ENCODE measurements at regions of chr2 and their contacts with region 1.

Region 1: GRCh38 chr2:241081643-241082340 is 20.3 kb downstream of the MTERF4 start:
- DNase-seq: no peak
- CTCF ChIP-seq: no peak

Region 2: DNA sequence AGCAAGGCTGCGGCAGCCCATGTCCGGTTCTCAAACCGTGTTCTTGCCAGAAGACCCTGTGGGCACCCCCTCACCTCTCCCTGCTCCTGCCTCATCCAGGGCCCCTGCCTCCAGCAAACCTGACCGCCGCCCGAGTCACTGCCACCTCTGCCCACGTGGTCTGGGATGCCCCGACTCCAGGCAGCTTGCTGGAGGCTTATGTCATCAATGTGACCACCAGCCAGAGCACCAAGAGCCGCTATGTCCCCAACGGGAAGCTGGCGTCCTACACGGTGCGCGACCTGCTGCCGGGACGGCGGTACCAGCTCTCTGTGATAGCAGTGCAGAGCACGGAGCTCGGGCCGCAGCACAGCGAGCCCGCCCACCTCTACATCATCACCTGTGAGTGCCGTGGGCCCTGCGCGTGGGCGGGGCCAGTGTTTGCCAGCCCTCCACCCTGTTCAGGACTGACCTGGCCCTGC is 11.9 kb before region 1 on chr2:
- CTCF ChIA-PET with region 1: interaction called, 12 read pairs
- POLR2A ChIA-PET with region 1: no interaction called
- DNase-seq: no peak
- CTCF ChIP-seq: no peak

Region 3: GRCh38 chr2:241096979-241097378 is 15.2 kb after region 1 on chr2:
- CTCF ChIA-PET with region 1: interaction called, 19 read pairs
- POLR2A ChIA-PET with region 1: no interaction called
- DNase-seq: no peak
- CTCF ChIP-seq: no peak

Region 4: GRCh38 chr2:241102239-241102803 is 20.5 kb after region 1 on chr2 and contains the start of gene MTERF4:
- CTCF ChIA-PET with region 1: interaction called, 19 read pairs
- POLR2A ChIA-PET with region 1: no interaction called
- DNase-seq: peak; percentile 90
- CTCF ChIP-seq: no peak

Region 5: GRCh38 chr2:241110607-241111439 is 29.0 kb after region 1 on chr2:
- CTCF ChIA-PET with region 1: interaction called, 13 read pairs
- POLR2A ChIA-PET with region 1: no interaction called
- DNase-seq: peak; percentile 73
- CTCF ChIP-seq: no peak

Region 6: DNA sequence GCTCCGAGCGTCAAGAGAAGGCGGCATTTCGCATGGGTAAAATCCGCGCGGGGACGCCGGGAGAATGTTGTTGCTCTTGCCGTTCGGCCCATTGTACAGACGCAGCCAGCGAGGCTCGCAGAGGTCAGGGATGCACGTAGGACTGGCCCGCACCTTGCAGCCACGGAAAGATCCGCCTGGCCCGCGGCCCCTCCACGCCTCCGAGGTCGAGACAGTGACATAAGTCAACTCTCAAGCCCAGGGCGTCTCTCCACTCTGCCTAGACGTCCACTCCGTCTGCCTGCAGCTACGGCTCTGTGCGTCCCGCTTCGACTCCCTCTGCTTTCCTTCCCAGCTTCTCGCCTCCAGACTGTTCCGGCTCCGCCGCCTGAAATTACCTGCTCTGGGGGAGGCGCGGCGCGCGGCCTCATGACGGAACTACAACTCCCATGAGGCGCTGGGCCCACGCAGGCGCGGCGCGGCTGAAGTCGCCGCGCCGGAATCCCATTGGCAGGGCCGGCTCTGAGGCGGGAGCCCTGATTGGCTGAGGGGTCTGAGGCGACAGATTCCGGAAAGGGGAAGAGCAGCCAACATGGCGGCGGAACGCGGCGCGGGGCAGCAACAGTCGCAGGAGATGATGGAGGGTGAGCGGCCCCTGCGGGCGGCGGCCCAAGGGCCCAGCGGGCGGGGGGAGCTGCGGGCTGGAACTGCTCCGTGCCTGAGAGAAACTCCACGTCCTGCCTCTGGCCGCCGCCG is 68.3 kb after region 1 on chr2 and contains the start of gene PPP1R7:
- CTCF ChIA-PET with region 1: interaction called, 31 read pairs
- POLR2A ChIA-PET with region 1: no interaction called
- DNase-seq: peak; percentile 98
- CTCF ChIP-seq: peak; percentile 59

Region 7: GRCh38 chr2:241209271-241209670 is 127.5 kb after region 1 on chr2:
- CTCF ChIA-PET with region 1: no interaction called
- POLR2A ChIA-PET with region 1: no interaction called
- DNase-seq: no peak
- CTCF ChIP-seq: no peak

Region 8: GRCh38 chr2:241289597-241289996 is 207.8 kb after region 1 on chr2:
- CTCF ChIA-PET with region 1: no interaction called
- POLR2A ChIA-PET with region 1: no interaction called
- DNase-seq: no peak
- CTCF ChIP-seq: no peak

Region 9: DNA sequence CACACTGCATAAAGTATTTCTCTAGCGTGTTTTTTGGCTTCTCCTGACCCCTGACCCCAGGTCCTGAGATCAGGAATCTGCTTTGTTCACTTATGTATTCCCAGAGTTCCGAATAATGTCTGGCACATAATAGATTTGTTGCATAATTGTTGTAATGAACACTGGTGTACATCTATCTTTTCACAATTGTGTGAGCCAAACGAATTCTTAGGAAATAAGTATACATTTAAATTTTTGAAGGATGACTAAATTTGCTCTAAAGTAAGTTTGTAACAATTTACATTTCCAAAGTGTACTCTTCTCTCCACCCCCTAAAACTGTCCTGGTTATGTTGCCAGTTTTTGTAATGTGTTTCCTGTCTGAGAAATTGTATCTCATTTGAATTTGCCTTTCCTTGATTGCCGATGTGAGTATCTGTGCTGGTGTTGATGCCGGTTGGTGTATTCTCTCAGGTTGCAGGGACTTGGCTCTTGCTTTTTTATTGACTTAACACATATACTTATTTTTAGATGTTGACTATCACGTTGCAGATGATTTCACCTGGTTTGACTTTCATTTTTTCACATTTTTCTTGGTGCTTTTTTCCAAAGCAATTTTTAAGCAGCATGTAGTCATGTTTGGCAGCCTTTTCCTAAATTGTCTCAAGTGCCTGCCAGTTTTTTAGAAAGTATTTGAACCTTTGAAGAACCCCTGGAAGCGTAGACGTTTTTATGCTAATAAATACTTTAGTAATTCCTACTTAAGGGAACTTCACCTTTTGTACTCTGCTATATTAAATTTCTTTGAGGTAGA is 258.2 kb after region 1 on chr2:
- CTCF ChIA-PET with region 1: no interaction called
- POLR2A ChIA-PET with region 1: no interaction called
- DNase-seq: no peak
- CTCF ChIP-seq: no peak